Right cardiac atrium (tissue), 5 donors: ENCODE measurements at regions of chr4 and their contacts with region 1.

Region 1: DNA sequence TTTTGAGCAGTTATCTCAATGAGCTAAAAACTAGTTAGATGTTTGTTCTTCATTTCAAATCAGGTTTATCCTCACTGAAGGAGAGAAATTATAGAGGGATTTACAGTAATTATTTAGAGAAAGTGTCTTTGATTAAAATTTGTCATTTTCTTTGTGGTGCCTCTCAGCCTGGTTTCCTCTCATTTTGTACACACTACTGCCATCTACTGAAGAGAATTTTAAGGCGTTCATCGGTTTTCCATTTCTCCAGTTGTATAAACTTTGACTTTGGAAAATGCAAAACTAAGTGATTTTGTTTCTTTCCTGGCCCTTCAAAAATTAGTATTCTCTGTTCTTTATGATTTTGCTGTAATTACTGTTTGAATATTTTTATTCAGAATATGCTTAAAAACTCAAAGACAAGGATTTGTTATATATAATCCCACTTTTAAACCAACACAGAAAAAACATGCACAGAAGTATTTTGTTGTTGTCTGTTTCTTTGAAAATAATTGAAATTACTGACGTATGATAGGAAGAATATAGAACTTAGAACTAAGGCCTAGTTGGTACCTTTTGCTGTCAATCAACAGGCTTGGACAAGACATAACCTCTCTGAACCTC is 34.4 kb upstream of the ANXA3 start:
- DNase-seq: no peak
- ATAC-seq: no peak
- H3K4me3 ChIP-seq: no peak overlapping the region
- H3K27ac ChIP-seq: no peak overlapping the region
- H3K4me1 ChIP-seq: peaks cover 3% of the 10 kb centered on the region
- H3K27me3 ChIP-seq: no peaks in the 10 kb centered on the region

Region 2: DNA sequence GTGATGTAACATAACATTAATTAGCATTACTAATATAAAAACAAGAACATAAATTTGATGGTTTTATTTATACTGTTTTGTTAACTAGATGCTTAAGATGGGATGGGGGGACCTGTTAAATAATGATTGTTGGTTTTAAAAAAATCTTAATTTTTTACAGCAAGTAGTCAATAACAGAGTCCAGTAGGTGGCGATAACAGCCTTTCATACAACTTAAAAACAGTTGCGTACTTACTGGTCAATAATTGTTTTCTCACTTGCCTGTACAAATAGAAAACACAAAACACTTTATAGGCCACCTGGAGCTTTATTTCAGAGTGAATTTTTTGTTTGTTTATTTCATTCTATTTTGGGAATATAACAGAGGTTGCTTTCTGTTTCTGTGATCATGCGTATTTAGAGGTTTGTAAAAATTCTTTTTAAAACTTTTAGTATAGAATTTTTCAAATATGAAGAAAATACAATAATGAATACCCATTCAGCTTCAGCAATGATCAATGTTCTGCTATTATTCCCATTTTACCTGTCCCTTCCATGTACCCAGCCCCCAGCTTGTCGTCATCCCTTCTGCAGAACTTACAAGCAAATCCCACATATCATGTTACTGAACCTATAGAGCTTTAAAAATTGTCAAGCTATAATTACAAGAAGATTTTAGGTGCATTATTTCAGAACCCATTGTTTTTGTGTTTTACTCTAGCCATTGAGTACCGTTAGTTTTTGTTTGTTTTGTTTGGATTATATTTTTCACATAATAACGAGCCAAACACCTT is 557.4 kb before region 1 on chr4:
- intact Hi-C with region 1: loop called in 2 of 4 experiments (anchors 5 to 10 kb)
- DNase-seq: no peak
- ATAC-seq: no peak
- H3K4me3 ChIP-seq: peak overlapping the region; percentile 28
- H3K27ac ChIP-seq: no peak overlapping the region
- H3K4me1 ChIP-seq: no peaks in the 10 kb centered on the region
- H3K27me3 ChIP-seq: no peaks in the 10 kb centered on the region

Region 3: GRCh38 chr4:78056265-78057129 is 460.7 kb before region 1 on chr4:
- intact Hi-C with region 1: loop called in 1 of 4 experiments (anchors 10 kb)
- DNase-seq: peak; percentile 77 to 88 (median 87)
- ATAC-seq: peak; percentile 77 to 78
- H3K4me3 ChIP-seq: peak overlapping the region; percentile 73
- H3K27ac ChIP-seq: peak overlapping the region; percentile 56
- H3K4me1 ChIP-seq: no peaks in the 10 kb centered on the region
- H3K27me3 ChIP-seq: no peaks in the 10 kb centered on the region